Right ventricle myocardium inferior (tissue), 1 donor: ENCODE measurements at regions of chr21 and their contacts with region 1.

Region 1: DNA sequence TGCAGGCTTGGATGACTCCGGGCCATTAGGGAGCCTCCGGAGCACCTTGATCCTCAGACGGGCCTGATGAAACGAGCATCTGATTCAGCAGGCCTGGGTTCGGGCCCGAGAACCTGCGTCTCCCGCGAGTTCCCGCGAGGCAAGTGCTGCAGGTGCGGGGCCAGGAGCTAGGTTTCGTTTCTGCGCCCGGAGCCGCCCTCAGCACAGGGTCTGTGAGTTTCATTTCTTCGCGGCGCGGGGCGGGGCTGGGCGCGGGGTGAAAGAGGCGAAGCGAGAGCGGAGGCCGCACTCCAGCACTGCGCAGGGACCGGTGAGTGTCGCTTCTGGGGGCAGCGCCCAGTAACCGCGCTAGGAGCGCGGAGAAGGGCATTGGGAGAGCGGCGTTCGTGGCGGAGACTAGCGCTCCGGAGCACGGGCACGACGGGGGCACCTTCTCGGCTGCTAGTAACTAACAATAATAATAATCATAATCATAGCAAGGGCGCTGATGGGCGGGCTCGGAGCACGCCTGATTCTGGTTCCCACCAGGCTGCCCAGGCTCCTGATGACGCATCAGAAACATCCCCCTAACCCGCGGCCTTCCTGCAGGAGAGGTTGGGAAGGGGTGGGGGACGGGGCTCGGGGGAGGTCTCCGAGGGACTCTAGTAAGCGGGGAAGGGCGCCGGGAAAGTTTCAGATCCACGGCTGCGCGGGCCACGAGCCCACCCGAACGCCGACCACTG is at the start of gene MX1:
- DNase-seq: peak; percentile 95
- ATAC-seq: peak; percentile 93
- total RNA-seq, gene MX1: 11.0 TPM

Region 2: GRCh38 chr21:41369105-41369919 is 56.8 kb before region 1 on chr21:
- intact Hi-C with region 1: loop called (anchors 5 kb)
- DNase-seq: peak; percentile 80
- ATAC-seq: peak; percentile 38

Region 3: GRCh38 chr21:41477641-41478318 is 51.7 kb after region 1 on chr21:
- intact Hi-C with region 1: no loop called
- DNase-seq: no peak
- ATAC-seq: no peak

Region 4: DNA sequence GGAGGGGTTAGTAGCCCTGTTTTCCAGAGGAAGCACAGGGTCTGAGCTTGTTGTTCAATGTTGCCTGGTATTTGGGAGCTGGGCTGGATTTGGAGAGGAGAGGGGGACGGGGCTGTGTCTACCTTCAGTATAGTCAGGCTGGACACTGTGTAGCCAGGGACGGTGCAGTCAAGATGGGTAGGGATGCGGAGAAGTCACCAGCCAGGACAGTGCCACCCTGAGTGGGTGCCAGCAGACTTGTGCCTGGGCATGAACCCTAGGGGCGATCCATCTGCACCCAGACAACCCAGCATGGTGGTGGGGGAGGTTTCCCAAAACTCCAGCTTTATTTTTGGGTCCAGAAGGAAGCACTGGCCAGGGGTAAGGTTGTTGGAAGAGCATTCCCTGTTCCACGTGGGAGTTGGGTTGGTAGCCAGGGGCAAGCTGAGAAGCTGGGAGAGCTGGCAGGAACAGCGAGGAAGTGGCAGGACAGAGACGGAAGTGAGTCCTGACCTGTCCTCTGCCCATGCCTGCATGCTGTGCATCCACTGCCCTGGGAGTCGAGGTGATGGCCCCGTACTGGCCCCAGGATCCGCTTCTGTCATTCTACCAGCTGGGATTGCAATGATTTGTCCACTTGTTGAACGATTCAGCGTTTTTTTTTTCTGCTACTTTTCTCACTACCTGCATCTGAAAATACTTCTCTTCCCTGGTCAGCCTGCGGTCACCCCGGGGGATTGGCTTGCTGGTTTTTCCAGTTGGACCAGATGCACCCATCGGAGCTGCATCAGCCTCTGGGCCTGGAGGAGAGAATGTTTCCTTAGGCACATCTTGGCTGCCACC is 109.9 kb after region 1 on chr21:
- intact Hi-C with region 1: no loop called
- DNase-seq: no peak
- ATAC-seq: no peak